ENCODE measurements at regions of chr20 and their contacts with region 1.

Region 1: DNA sequence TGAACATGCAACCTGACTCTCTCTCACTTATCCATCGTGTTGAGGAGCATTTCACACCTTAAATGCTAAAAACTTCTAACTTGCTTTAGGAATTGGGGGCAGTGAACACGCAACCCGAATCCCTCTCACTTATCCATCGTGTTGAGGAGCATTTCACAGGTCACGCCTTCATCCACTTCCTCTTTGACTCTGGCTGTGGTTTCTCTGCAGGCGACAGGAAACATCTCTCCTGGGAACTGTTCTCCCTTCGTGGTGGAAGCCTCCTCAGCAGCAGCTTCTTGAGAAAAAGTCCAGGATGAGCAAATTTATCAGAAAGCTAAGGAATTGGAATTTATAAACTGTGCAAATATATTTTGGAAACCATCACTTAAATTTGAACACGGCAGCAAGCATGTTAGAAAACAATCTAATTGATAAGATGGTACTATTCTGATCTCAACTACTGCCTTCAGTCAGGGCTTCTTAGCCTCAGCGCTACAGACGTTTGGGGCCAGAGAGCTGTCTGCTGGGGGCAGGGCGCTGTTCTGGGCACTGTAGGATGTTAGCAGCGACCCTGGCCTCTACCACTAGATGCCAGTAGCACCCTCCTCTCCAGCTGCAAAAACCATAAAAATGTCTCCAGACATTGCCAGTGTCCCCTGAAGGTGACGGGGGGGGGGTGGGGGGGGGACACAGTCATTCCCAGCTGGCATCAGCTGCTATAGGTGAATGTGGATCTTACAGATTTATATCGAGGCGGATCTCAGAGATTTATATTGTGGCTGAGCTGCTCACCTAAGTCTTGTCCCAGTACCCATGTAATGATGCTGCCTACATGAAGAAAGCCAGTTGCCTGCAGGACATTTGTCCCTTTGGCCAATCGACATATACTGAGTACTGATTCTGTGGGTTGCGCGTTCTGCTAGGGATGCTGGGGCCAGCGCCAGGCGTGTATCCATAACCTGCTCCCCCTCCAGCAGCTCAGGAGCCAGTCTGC is 26.2 kb downstream of the CTCFL start:
- DNase-seq: peak; percentile 7
- ATAC-seq: peak; percentile 78
- H3K4me3 ChIP-seq: no peak overlapping the region
- H3K27ac ChIP-seq: no peak overlapping the region
- H3K4me1 ChIP-seq: no peaks in the 10 kb centered on the region; the same call in 1 of the 2 replicates
- H3K27me3 ChIP-seq: peaks cover 3% of the 10 kb centered on the region; the same call in 1 of the 2 replicates
- CTCF ChIP-seq: peak; percentile 43
- POLR2A ChIP-seq: no peak
- RAD21 ChIP-seq: peak; percentile 44; the same call in 1 of the 2 replicates

Region 2: DNA sequence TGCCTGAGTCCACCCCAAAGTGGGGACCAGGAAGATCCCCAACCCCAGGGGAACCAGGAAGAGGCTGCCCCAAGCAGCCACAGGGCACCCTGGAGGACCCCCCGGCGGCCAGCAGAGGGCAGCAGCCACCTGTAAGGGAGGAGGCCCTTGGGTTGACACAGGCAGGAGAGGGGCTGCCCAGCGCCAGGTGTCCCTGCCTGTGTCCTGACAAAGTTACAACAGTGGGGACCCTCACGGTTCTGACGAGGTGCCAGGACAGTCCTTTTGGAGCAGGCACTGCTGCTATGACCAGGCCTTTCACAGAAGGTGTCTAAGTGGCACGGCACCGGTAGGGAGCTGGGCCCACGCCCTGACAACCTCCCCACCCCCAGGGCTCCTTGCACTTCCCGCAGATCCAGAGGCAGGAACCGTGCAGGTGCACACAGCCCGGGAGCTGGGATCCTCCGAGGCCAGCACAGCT is 409.0 kb before region 1 on chr20:
- CTCF ChIA-PET with region 1: no interaction called
- POLR2A ChIA-PET with region 1: no interaction called
- dilution Hi-C with region 1: no loop called
- in situ Hi-C with region 1: no loop called
- intact Hi-C with region 1: loop called (anchors 5 kb)
- DNase-seq: peak; percentile 5
- ATAC-seq: peak; percentile 85
- H3K4me3 ChIP-seq: no peak overlapping the region
- H3K27ac ChIP-seq: no peak overlapping the region
- H3K4me1 ChIP-seq: no peaks in the 10 kb centered on the region
- H3K27me3 ChIP-seq: no peaks in the 10 kb centered on the region
- CTCF ChIP-seq: peak; percentile 59
- POLR2A ChIP-seq: no peak
- RAD21 ChIP-seq: peak; percentile 56

Region 3: GRCh38 chr20:57383447-57384347 is 115.0 kb before region 1 on chr20:
- CTCF ChIA-PET with region 1: interaction called, 10 read pairs
- POLR2A ChIA-PET with region 1: no interaction called
- dilution Hi-C with region 1: no loop called
- in situ Hi-C with region 1: loop called (anchors 5 kb)
- intact Hi-C with region 1: loop called (anchors 1 kb)
- DNase-seq: no peak
- ATAC-seq: no peak
- H3K4me3 ChIP-seq: no peak overlapping the region
- H3K27ac ChIP-seq: no peak overlapping the region
- H3K4me1 ChIP-seq: no peaks in the 10 kb centered on the region
- H3K27me3 ChIP-seq: no peaks in the 10 kb centered on the region
- CTCF ChIP-seq: no peak
- POLR2A ChIP-seq: no peak
- RAD21 ChIP-seq: no peak

Region 4: GRCh38 chr20:57391074-57391554 is 107.6 kb before region 1 on chr20 and contains the start of gene RBM38:
- CTCF ChIA-PET with region 1: no interaction called
- POLR2A ChIA-PET with region 1: no interaction called
- dilution Hi-C with region 1: no loop called
- in situ Hi-C with region 1: loop called (anchors 5 kb)
- intact Hi-C with region 1: no loop called
- DNase-seq: peak; percentile 49
- ATAC-seq: peak; percentile 96
- H3K4me3 ChIP-seq: peak within 1 kb of the TSS; percentile 99
- H3K27ac ChIP-seq: peak within 1 kb of the TSS; percentile 30; the same call in 1 of the 2 replicates
- H3K4me1 ChIP-seq: peaks cover 9% of the 10 kb centered on the region
- H3K27me3 ChIP-seq: no peaks in the 10 kb centered on the region
- CTCF ChIP-seq: no peak
- POLR2A ChIP-seq: no peak
- RAD21 ChIP-seq: no peak
- total RNA-seq, gene RBM38: 5.2 and 6.9 TPM in 2 replicates

Region 5: GRCh38 chr20:57693002-57693640 is 194.4 kb after region 1 on chr20:
- CTCF ChIA-PET with region 1: no interaction called
- POLR2A ChIA-PET with region 1: no interaction called
- dilution Hi-C with region 1: no loop called
- in situ Hi-C with region 1: no loop called
- intact Hi-C with region 1: no loop called
- DNase-seq: no peak
- ATAC-seq: no peak
- H3K4me3 ChIP-seq: no peak overlapping the region
- H3K27ac ChIP-seq: no peak overlapping the region
- H3K4me1 ChIP-seq: peaks cover 10% of the 10 kb centered on the region
- H3K27me3 ChIP-seq: no peaks in the 10 kb centered on the region
- CTCF ChIP-seq: no peak
- POLR2A ChIP-seq: no peak
- RAD21 ChIP-seq: no peak